ENCODE measurements at regions of chr12 and their contacts with region 1.

Region 1: DNA sequence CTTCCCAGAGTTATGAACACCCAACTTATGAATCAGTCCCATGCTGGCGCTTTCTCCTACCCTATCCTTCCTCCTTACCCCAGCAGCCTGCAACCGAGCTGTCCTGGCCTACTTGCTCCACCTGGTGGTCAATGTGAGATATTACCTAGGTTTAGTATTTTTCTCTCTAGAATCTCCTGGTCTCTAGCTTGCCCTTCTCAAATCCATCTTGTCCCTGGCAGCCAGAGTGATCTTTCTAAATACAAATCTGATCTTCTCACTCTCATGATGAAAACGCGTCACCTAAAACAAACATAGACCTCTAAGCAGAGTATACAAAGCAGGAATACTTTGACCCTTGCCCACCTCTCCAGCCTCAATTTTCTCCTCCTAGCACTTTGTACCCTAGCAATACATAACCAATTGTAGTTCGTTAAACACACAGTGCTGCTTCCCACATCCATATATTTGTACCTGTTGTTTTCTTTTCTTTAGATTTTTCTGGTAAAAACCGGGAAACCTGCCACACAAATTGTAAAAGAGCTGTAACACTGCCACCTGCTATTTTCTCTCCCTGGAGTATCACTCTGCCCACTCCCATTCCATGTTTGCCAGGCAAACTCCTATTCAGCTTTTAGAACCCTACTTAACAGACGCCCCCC is 20.0 kb upstream of the TCP11L2 start:
- DNase-seq: peak; percentile 47
- CTCF ChIP-seq: peak; percentile 71

Region 2: DNA sequence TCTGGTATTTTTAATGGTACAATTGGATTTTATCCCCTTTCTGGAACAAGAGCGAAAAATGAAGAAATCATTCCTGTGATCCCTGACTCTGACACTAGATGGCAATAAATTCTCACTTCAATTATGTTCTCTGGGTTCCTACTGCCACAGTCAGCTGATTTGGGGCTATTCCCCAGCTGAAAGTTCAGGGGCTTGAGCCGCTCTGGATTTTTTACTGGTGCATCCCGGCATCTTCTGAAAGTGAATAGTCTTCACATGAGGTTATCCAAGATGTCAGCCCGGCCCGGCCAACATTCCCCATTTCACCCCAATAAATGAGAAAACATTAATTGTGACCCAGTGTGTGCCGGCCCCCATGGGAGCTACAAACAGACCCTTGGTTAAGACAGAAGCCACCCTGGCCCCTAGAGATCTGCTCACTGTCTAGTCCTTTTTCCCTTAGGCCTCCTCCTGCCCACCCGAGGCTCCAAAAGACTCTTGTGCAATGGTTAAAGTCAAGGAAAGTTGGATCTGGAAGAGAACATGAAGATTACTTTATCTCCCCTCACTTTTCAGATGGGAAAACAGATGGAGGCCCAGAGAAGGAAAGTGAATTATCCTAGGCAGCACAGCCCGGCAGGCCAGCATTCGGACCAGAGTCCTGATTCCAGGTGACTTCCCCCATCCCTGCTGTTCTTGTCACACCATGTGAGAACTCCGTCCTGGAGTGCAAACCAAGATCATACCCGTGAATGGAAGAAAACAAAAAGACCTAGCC is 55.5 kb before region 1 on chr12:
- in situ Hi-C with region 1: loop called (anchors 5 kb)
- DNase-seq: peak; percentile 79
- CTCF ChIP-seq: peak; percentile 68

Region 3: GRCh38 chr12:106455111-106455510 is 172.5 kb after region 1 on chr12:
- in situ Hi-C with region 1: no loop called
- DNase-seq: peak; percentile 15
- CTCF ChIP-seq: no peak